ENCODE measurements at regions of chr14 and their contacts with region 1.

Region 1: GRCh38 chr14:65019944-65020566 is 33.4 kb downstream of the FNTB start:
- DNase-seq: peak; percentile 51 to 80
- ATAC-seq: peak; percentile 99
- H3K4me3 ChIP-seq: no peak overlapping the region
- H3K27ac ChIP-seq: no peak overlapping the region
- H3K4me1 ChIP-seq: no peaks in the 10 kb centered on the region
- CTCF ChIP-seq: peak; percentile 64
- EP300 ChIP-seq: no peak
- POLR2A ChIP-seq: no peak
- RAD21 ChIP-seq: peak; percentile 52 to 54; a peak in 4 of 5 replicates

Region 2: DNA sequence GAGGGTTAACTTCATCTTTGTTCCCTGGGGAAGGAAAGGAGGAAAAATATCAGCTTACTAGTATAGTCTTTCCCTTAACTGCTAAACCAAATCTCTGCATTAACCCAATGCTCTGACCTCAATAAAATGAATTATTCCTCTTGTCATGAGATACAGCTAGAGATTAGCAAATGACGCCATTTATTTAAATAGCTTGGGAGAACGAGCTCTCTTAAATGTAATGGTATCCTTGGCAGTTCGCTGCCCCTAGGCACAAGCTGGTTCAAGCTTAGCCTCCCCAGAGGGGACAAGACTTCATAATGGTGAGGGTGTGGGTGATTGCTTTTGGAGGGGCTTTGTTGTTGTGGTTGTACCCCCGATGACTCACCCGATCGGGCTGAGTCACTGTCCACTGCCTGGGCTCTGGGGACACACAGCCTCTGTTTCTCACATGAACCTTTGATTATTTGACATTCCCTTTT is 13.8 kb before region 1 on chr14:
- CTCF ChIA-PET with region 1: interaction called, 28 read pairs
- POLR2A ChIA-PET with region 1: no interaction called
- DNase-seq: no peak
- ATAC-seq: no peak
- H3K4me3 ChIP-seq: no peak overlapping the region
- H3K27ac ChIP-seq: no peak overlapping the region
- H3K4me1 ChIP-seq: peaks cover 8% of the 10 kb centered on the region; the same call in 2 of the 3 replicates
- CTCF ChIP-seq: no peak
- EP300 ChIP-seq: no peak
- POLR2A ChIP-seq: no peak
- RAD21 ChIP-seq: no peak